Activated CD4-positive, alpha-beta T cell treated with anti-CD3 and anti-CD28 coated beads for 36 hours (primary cell): ENCODE measurements at regions of chr5 and their contacts with region 1.

Region 1: GRCh38 chr5:77638763-77639671 is 504 bp upstream of the OTP start:
- DNase-seq: peak; percentile 43
- ATAC-seq: peak; percentile 61
- H3K4me3 Mint-ChIP-seq: no peak overlapping the region
- H3K27ac Mint-ChIP-seq: no peak overlapping the region
- H3K4me1 Mint-ChIP-seq: peaks cover 27% of the 10 kb centered on the region
- H3K27me3 Mint-ChIP-seq: peaks cover 69% of the 10 kb centered on the region

Region 2: DNA sequence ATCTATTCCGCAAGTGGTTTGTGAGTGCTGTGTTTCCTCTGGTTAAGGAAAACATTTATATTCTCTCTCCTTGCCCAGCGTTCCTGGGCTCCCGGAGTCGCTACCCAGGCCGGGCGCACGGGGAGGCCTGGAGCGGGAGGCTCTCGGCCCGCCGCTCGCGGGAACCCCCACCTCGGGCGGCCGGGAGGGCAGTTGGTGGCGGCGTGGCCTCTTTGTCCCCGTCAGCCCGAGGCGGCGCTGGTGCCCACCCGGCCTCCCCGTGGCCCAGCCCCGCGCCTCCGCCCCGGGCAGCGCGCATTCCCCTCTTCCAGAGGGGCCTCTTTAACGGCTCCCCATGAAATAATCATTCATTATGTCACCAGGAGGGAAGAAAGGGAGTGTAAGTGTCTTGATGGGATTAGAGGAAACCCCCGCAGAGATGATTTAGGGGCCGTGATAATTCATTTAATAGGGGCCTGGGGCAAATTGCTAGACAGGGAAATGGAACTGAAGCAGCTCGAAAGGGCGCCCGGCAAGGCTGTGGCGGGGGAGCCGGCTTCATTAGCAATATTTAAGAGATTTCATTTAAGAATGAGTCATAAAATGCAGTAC is 319.0 kb after region 1 on chr5:
- CTCF ChIA-PET with region 1: no interaction called
- POLR2A ChIA-PET with region 1: no interaction called
- intact Hi-C with region 1: loop called in 1 of 2 experiments (anchors 5 kb)
- DNase-seq: no peak
- ATAC-seq: no peak
- H3K4me3 Mint-ChIP-seq: no peak overlapping the region
- H3K27ac Mint-ChIP-seq: no peak overlapping the region
- H3K4me1 Mint-ChIP-seq: peaks cover 18% of the 10 kb centered on the region
- H3K27me3 Mint-ChIP-seq: peaks cover 26% of the 10 kb centered on the region